CD8-positive, alpha-beta T cell (primary cell): ENCODE measurements at regions of chr5 and their contacts with region 1.

Region 1: DNA sequence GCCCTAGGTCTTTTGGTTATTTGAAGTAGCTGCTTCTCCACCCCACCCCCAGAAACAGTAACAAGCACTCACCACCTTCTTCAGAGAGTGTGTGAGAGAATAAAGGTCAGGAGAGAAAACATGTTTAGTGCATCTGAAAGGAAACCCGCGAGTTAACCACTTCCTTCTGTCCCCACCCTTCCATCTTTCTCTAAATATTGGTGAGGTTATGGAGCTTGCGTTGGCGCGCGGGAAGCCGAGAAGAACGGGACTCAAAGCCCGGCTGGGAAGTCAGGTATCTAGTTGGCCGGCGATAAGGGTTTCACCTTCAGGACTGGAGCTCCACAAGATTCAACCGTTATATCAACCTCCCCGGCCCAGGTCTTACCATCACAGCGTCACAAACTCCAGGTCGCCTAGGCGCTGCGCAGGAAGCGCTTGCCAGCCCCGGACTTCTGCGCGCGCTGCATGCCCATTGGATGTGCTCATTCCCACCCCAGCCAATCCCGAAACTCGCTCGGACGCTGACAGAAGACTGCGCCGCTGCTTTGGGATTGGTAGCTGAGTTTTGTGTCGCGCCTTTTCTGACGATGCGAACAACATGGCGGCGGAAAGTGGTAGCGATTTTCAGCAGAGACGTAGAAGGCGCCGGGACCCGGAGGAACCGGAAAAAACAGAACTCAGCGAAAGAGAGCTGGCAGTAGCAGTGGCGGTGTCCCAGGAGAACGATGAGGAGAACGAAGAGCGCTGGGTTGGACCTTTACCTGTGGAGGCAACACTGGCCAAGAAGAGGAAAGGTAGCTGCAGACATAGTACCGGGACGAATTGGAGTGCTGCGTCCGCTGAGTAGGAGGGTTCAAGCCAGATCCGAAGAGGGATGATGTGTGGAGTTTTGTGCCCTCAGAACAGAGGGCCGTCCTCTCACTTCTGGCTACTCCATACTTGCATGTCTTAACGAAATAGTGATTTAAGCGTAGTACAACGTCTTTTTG is at the starts of genes CENPK and PPWD1:
- DNase-seq: peak; percentile 83 to 98 (median 95)
- ATAC-seq: peak; percentile 97
- H3K4me3 ChIP-seq: peak within 1 kb of the TSS; percentile 74 to 82
- H3K4me3 Mint-ChIP-seq: peak within 1 kb of the TSS; percentile 100
- H3K27ac ChIP-seq: peak within 1 kb of the TSS; percentile 97 to 98
- H3K27ac Mint-ChIP-seq: peak within 1 kb of the TSS; percentile 100
- H3K4me1 ChIP-seq: peaks cover 37% of the 10 kb centered on the region
- H3K4me1 Mint-ChIP-seq: peaks cover 42% of the 10 kb centered on the region
- H3K27me3 ChIP-seq: no peaks in the 10 kb centered on the region
- H3K27me3 Mint-ChIP-seq: no peaks in the 10 kb centered on the region
- CTCF ChIP-seq: no peak
- total RNA-seq, gene CENPK: 5.1 to 5.3 TPM
- total RNA-seq, gene PPWD1: 78.8 to 81.5 TPM

Region 2: GRCh38 chr5:65035211-65036206 is 527.5 kb before region 1 on chr5:
- CTCF ChIA-PET with region 1: no interaction called
- POLR2A ChIA-PET with region 1: interaction called, 5 read pairs
- intact Hi-C with region 1: loop called (anchors 1 to 2 kb)
- DNase-seq: peak; percentile 62 to 95 (median 83)
- ATAC-seq: peak; percentile 76
- H3K4me3 ChIP-seq: peak overlapping the region; percentile 57 to 60
- H3K4me3 Mint-ChIP-seq: peak overlapping the region; percentile 95
- H3K27ac ChIP-seq: peak overlapping the region; percentile 83 to 96
- H3K27ac Mint-ChIP-seq: peak overlapping the region; percentile 89
- H3K4me1 ChIP-seq: peaks cover 20% of the 10 kb centered on the region
- H3K4me1 Mint-ChIP-seq: peaks cover 32% of the 10 kb centered on the region
- H3K27me3 ChIP-seq: no peaks in the 10 kb centered on the region
- H3K27me3 Mint-ChIP-seq: no peaks in the 10 kb centered on the region
- CTCF ChIP-seq: no peak

Region 3: GRCh38 chr5:65190328-65191053 is 372.5 kb before region 1 on chr5:
- CTCF ChIA-PET with region 1: no interaction called
- POLR2A ChIA-PET with region 1: no interaction called
- intact Hi-C with region 1: no loop called
- DNase-seq: no peak
- ATAC-seq: no peak
- H3K4me3 ChIP-seq: no peak overlapping the region
- H3K4me3 Mint-ChIP-seq: no peak overlapping the region
- H3K27ac ChIP-seq: no peak overlapping the region
- H3K27ac Mint-ChIP-seq: no peak overlapping the region
- H3K4me1 ChIP-seq: no peaks in the 10 kb centered on the region
- H3K4me1 Mint-ChIP-seq: no peaks in the 10 kb centered on the region
- H3K27me3 ChIP-seq: no peaks in the 10 kb centered on the region
- H3K27me3 Mint-ChIP-seq: no peaks in the 10 kb centered on the region
- CTCF ChIP-seq: no peak

Region 4: GRCh38 chr5:65382582-65382981 is 180.4 kb before region 1 on chr5:
- CTCF ChIA-PET with region 1: no interaction called
- POLR2A ChIA-PET with region 1: no interaction called
- intact Hi-C with region 1: no loop called
- DNase-seq: no peak
- ATAC-seq: no peak
- H3K4me3 ChIP-seq: no peak overlapping the region
- H3K4me3 Mint-ChIP-seq: no peak overlapping the region
- H3K27ac ChIP-seq: no peak overlapping the region
- H3K27ac Mint-ChIP-seq: no peak overlapping the region
- H3K4me1 ChIP-seq: no peaks in the 10 kb centered on the region
- H3K4me1 Mint-ChIP-seq: no peaks in the 10 kb centered on the region
- H3K27me3 ChIP-seq: no peaks in the 10 kb centered on the region
- H3K27me3 Mint-ChIP-seq: no peaks in the 10 kb centered on the region
- CTCF ChIP-seq: no peak

Region 5: DNA sequence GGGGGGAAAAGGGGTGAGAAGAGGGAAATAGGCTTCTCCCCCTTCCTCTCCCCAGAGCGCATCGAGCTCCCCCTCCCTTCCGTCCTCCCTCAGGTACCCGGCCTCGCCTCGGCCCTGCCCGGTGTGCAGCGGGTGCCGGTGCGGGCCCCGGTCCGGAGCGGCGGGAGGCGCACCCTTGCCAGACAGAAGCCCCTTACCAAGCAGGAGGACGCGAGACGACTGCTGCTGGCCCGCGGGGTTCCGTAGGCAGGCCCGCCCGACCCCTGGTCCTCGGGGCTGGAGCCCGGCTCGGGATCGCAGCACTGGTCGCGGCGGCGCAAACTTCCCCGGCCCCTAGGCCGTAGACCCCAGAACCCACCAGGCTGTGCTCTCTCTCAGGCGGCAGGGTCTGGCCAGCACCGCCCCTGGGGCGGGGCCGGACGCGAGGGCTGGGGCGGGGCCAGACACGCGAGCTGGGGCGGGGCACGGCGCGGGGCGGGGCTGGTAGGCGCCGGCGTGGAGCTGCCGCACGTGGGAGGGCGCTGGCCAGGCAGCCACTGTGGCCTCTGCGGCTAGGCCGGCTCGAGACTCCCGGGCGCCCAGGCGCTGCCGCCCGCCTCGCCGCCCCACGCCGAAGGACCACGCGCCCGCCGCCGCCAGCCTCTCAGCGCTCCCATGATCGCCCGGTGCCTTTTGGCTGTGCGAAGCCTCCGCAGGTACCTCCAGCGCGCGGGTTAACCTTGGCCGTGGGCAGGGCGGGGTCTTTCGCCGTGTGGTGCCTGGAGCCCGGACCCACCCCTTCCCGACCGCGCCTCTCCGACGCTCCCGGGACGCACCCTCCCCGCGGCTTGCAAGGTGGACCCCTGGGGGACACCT is 158.9 kb after region 1 on chr5 and contains the starts of genes NLN and SGTB:
- CTCF ChIA-PET with region 1: no interaction called
- POLR2A ChIA-PET with region 1: no interaction called
- intact Hi-C with region 1: loop called (anchors 2 to 5 kb)
- DNase-seq: peak; percentile 72 to 90 (median 84)
- ATAC-seq: peak; percentile 91
- H3K4me3 ChIP-seq: peak within 1 kb of the TSS; percentile 82 to 86
- H3K4me3 Mint-ChIP-seq: peak within 1 kb of the TSS; percentile 89
- H3K27ac ChIP-seq: peak within 1 kb of the TSS; percentile 78 to 86
- H3K27ac Mint-ChIP-seq: peak within 1 kb of the TSS; percentile 94
- H3K4me1 ChIP-seq: peaks cover 44% of the 10 kb centered on the region
- H3K4me1 Mint-ChIP-seq: peaks cover 25% of the 10 kb centered on the region
- H3K27me3 ChIP-seq: no peaks in the 10 kb centered on the region
- H3K27me3 Mint-ChIP-seq: no peaks in the 10 kb centered on the region
- CTCF ChIP-seq: no peak
- total RNA-seq, gene NLN: 1.4 to 1.5 TPM
- total RNA-seq, gene SGTB: 77.9 to 79.5 TPM

Region 6: DNA sequence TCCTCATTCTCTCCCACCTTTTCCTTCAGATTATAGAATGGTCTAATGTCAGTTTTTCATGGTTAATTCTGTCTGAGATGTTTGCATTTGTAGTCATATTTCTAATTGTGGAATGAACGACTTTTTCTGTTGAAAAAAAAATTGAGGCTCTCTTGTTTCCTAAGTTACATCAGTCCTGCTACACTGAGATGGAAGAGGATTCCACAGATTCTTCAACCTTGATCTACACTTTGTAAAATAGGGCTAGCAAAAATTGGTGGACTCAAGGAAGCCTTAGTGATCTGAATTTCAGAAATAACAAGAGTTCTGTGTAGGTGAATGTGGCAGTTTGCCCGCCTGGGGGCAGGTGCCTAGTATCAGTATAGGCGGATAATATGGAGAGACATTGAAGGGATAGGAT is 415.2 kb after region 1 on chr5:
- CTCF ChIA-PET with region 1: no interaction called
- POLR2A ChIA-PET with region 1: no interaction called
- intact Hi-C with region 1: no loop called
- DNase-seq: no peak
- ATAC-seq: no peak
- H3K4me3 ChIP-seq: no peak overlapping the region
- H3K4me3 Mint-ChIP-seq: no peak overlapping the region
- H3K27ac ChIP-seq: no peak overlapping the region
- H3K27ac Mint-ChIP-seq: no peak overlapping the region
- H3K4me1 ChIP-seq: peaks cover 12% of the 10 kb centered on the region
- H3K4me1 Mint-ChIP-seq: peaks cover 64% of the 10 kb centered on the region
- H3K27me3 ChIP-seq: no peaks in the 10 kb centered on the region
- H3K27me3 Mint-ChIP-seq: no peaks in the 10 kb centered on the region
- CTCF ChIP-seq: no peak